HepG2 (cell line): ENCODE measurements at regions of chr21 and their contacts with region 1.

Region 1: GRCh38 chr21:44482581-44483287 is 27.4 kb downstream of the LRRC3 start:
- DNase-seq: peak; percentile 99
- ATAC-seq: peak; percentile 90
- H3K4me3 ChIP-seq: peak overlapping the region; percentile 64 to 81 (median 69)
- H3K27ac ChIP-seq: peak overlapping the region; percentile 90
- H3K4me1 ChIP-seq: peaks cover 73% of the 10 kb centered on the region
- H3K27me3 ChIP-seq: no peaks in the 10 kb centered on the region; a peak in 1 of 5 replicates
- CTCF ChIP-seq: no peak
- EP300 ChIP-seq: peak in 1 of 2 experiments; percentile 77; a peak in 1 of 4 replicates
- POLR2A ChIP-seq: peak; percentile 95 to 97
- RAD21 ChIP-seq: no peak

Region 2: DNA sequence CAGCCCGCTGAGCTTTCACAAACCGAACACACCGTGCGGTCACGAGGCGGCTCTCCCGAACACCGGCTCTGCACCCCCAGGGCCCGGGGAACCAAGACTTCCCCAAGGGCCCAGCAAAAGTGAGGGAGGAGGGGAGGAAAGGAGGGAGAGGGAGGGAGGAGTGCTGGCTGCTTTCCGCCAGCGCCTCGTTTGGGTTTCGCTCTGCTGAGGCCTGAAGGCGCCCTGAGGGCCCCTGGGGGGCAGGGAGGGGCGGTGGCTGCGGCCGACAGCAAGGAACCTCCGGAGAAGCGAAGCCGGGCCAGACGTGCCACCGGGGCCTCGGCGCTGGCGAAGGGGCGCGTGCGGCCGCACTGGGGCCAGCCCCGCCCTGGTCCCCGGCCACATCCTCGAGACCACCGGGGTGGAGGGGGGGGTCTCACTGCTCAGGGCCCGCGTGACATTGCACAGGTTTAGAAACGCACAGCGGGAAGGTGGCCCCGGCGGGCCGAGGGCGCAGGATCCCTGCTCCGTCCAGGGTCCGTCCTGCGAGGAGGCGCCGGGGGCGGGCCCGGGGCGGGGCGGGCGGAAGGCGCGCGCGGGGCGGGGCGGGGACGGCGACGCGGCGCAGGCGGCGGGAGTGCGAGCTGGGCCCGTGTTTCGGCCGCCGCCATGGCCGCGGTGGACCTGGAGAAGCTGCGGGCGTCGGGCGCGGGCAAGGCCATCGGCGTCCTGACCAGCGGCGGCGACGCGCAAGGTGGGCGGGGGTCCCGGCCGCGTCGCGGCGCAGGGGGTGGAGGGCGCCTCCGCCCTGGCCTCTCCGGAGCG is 183.1 kb before region 1 on chr21 and contains the start of gene PFKL:
- CTCF ChIA-PET with region 1: no interaction called
- POLR2A ChIA-PET with region 1: interaction called, 23 read pairs
- in situ Hi-C with region 1: no loop called
- intact Hi-C with region 1: loop called (anchors 10 kb)
- DNase-seq: peak; percentile 24
- ATAC-seq: peak; percentile 31
- H3K4me3 ChIP-seq: peak within 1 kb of the TSS; percentile 66 to 80 (median 75)
- H3K27ac ChIP-seq: peak within 1 kb of the TSS; percentile 87
- H3K4me1 ChIP-seq: peaks cover 75% of the 10 kb centered on the region
- H3K27me3 ChIP-seq: peaks cover 9 to 26% of the 10 kb centered on the region in 2 experiments
- CTCF ChIP-seq: no peak; the same call in 1 of the 2 replicates
- EP300 ChIP-seq: no peak
- POLR2A ChIP-seq: peak in 1 of 2 experiments; percentile 49; a peak in 2 of 4 replicates
- RAD21 ChIP-seq: no peak; the same call in 1 of the 2 replicates
- total RNA-seq, gene PFKL: 87.6 and 106 TPM in 2 replicates

Region 3: DNA sequence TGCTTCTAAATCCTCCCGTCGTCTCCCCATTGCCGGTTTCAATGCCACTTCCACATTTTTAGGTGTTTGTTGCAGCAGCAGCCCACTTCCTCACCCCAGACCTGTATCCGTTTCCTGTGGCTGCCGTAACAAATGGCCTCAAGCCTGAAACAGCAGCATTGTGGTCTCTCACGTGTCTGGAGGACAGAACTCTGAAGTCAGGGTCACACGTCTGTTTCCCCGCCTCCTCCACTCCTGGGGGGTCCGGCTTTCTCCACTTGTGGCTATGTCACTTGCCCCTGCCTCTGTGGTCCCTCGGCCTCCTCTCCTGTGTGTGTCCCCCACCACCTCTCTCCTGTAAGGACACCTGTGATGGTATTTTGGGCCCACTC is 107.5 kb before region 1 on chr21:
- CTCF ChIA-PET with region 1: no interaction called
- POLR2A ChIA-PET with region 1: no interaction called
- in situ Hi-C with region 1: loop called (anchors 5 kb)
- intact Hi-C with region 1: no loop called
- DNase-seq: no peak
- ATAC-seq: no peak
- H3K4me3 ChIP-seq: no peak overlapping the region
- H3K27ac ChIP-seq: no peak overlapping the region
- H3K4me1 ChIP-seq: peaks cover 7% of the 10 kb centered on the region
- H3K27me3 ChIP-seq: peaks cover 16 to 46% of the 10 kb centered on the region in 2 experiments
- CTCF ChIP-seq: no peak
- EP300 ChIP-seq: no peak
- POLR2A ChIP-seq: no peak
- RAD21 ChIP-seq: no peak

Region 4: GRCh38 chr21:44454747-44455523 is 27.8 kb before region 1 on chr21 and contains the start of gene LRRC3:
- CTCF ChIA-PET with region 1: no interaction called
- POLR2A ChIA-PET with region 1: interaction called, 115 read pairs
- in situ Hi-C with region 1: no loop called
- intact Hi-C with region 1: no loop called
- DNase-seq: peak; percentile 82
- ATAC-seq: peak; percentile 61
- H3K4me3 ChIP-seq: peak within 1 kb of the TSS; percentile 75 to 87 (median 75)
- H3K27ac ChIP-seq: peak within 1 kb of the TSS; percentile 85
- H3K4me1 ChIP-seq: peaks cover 51% of the 10 kb centered on the region
- H3K27me3 ChIP-seq: no peaks in the 10 kb centered on the region; a peak in 2 of 5 replicates
- CTCF ChIP-seq: no peak
- EP300 ChIP-seq: no peak
- POLR2A ChIP-seq: no peak
- RAD21 ChIP-seq: no peak
- total RNA-seq, gene LRRC3: 3.9 and 4.8 TPM in 2 replicates

Region 5: GRCh38 chr21:44497703-44498126 is 15.0 kb after region 1 on chr21:
- CTCF ChIA-PET with region 1: no interaction called
- POLR2A ChIA-PET with region 1: interaction called, 28 read pairs
- in situ Hi-C with region 1: no loop called
- intact Hi-C with region 1: no loop called
- DNase-seq: no peak
- ATAC-seq: peak; percentile 3
- H3K4me3 ChIP-seq: peak overlapping the region in 1 of 3 experiments; percentile 67; a peak in 1 of 6 replicates
- H3K27ac ChIP-seq: peak overlapping the region; percentile 38
- H3K4me1 ChIP-seq: peaks cover 28% of the 10 kb centered on the region
- H3K27me3 ChIP-seq: no peaks in the 10 kb centered on the region
- CTCF ChIP-seq: no peak
- EP300 ChIP-seq: no peak
- POLR2A ChIP-seq: no peak
- RAD21 ChIP-seq: no peak

Region 6: GRCh38 chr21:44742418-44743153 is 259.9 kb after region 1 on chr21:
- CTCF ChIA-PET with region 1: no interaction called
- POLR2A ChIA-PET with region 1: no interaction called
- in situ Hi-C with region 1: no loop called
- intact Hi-C with region 1: no loop called
- DNase-seq: peak; percentile 30
- ATAC-seq: no peak
- H3K4me3 ChIP-seq: no peak overlapping the region
- H3K27ac ChIP-seq: no peak overlapping the region
- H3K4me1 ChIP-seq: no peaks in the 10 kb centered on the region
- H3K27me3 ChIP-seq: peaks cover 3 to 12% of the 10 kb centered on the region in 2 experiments; a peak in 4 of 5 replicates
- CTCF ChIP-seq: peak; percentile 60
- EP300 ChIP-seq: no peak
- POLR2A ChIP-seq: no peak
- RAD21 ChIP-seq: peak; percentile 17; the same call in 1 of the 2 replicates

Region 7: GRCh38 chr21:44907225-44907965 is 424.7 kb after region 1 on chr21:
- CTCF ChIA-PET with region 1: no interaction called
- POLR2A ChIA-PET with region 1: no interaction called
- in situ Hi-C with region 1: no loop called
- intact Hi-C with region 1: no loop called
- DNase-seq: peak; percentile 36
- ATAC-seq: peak; percentile 62
- H3K4me3 ChIP-seq: peak overlapping the region; percentile 43 to 58 (median 57)
- H3K27ac ChIP-seq: no peak overlapping the region
- H3K4me1 ChIP-seq: peaks cover 81% of the 10 kb centered on the region
- H3K27me3 ChIP-seq: no peaks in the 10 kb centered on the region
- CTCF ChIP-seq: peak; percentile 53
- EP300 ChIP-seq: no peak
- POLR2A ChIP-seq: no peak
- RAD21 ChIP-seq: peak; percentile 32; the same call in 1 of the 2 replicates